Right ventricle myocardium inferior (tissue), 1 donor: ENCODE measurements at regions of chr13 and their contacts with region 1.

Region 1: GRCh38 chr13:27533155-27533643 is 82.8 kb upstream of the MTIF3 start:
- DNase-seq: peak; percentile 91
- ATAC-seq: peak; percentile 93

Region 2: DNA sequence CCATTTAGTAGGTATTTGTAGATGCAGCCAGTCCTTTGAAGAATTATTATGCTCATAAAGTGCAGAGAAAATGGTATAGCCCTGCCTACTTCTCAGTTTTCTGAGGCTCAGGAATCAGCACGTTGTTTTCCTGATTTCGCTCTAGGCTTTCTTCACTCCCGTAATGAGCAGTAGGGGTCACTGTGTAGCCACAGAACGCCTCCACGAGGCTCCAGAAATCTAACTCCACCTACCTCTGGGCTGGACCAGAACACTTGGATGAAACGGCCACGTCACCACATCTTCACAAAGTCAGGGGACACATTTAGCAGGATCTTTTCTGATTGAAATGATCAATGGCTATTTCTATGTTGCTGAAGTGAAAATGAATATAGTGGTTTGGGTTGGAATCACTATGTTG is 158.5 kb before region 1 on chr13:
- intact Hi-C with region 1: loop called (anchors 10 kb)
- DNase-seq: peak; percentile 49
- ATAC-seq: peak; percentile 90

Region 3: GRCh38 chr13:27549406-27549981 is 16.3 kb after region 1 on chr13:
- intact Hi-C with region 1: no loop called
- DNase-seq: no peak
- ATAC-seq: no peak

Region 4: GRCh38 chr13:27620377-27621115 is 87.3 kb after region 1 on chr13 and contains the start of gene LNX2:
- intact Hi-C with region 1: loop called (anchors 2 kb)
- DNase-seq: peak; percentile 99
- ATAC-seq: peak; percentile 98
- total RNA-seq, gene LNX2: 11.4 TPM

Region 5: DNA sequence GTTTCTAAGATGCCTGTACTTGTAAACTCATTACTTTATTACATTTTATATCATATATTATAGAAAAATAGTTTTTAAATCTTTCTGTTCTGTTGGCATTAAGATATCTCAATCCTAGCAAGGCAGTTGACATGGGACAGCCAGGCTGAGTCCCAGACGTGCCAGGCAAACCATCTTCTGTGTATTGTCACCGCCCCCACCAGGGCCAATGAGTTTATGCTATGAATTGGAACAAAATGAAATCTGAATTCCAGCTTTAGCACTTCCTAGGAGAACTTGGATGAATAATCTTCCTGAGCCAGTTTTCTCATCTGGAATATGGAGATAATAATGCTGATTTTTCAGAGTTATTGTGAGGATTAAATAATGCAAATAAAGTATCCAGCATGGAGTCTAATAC is 179.2 kb after region 1 on chr13:
- intact Hi-C with region 1: loop called (anchors 5 kb)
- DNase-seq: no peak
- ATAC-seq: no peak

Region 6: DNA sequence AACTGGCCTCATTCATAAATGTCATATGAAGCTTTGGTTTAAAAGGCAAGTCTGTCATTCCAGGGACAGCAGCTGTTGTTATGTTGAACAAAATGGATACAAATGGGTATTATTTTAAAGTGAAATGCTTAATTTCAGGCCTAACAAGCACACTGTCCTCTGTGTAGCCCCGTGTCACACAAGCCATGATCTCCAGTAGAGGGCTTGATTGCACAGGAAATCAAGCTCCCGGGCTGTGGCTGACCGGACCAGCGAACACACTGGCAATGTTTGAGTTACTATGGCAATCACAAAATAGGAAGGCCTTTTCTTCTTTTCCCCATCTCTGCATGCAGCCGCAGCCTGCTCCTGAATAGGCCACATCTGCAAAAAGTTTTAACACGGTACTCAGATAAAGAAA is 195.1 kb after region 1 on chr13:
- intact Hi-C with region 1: no loop called
- DNase-seq: no peak
- ATAC-seq: no peak

Region 7: GRCh38 chr13:27783111-27783510 is 249.9 kb after region 1 on chr13:
- intact Hi-C with region 1: loop called (anchors 5 kb)
- DNase-seq: no peak
- ATAC-seq: peak; percentile 44

Region 8: GRCh38 chr13:28468023-28468915 is 935.1 kb after region 1 on chr13:
- intact Hi-C with region 1: no loop called
- DNase-seq: no peak
- ATAC-seq: no peak

Region 9: GRCh38 chr13:28953714-28954418 is 1420.7 kb after region 1 on chr13:
- intact Hi-C with region 1: no loop called
- DNase-seq: no peak
- ATAC-seq: no peak